ENCODE measurements at regions of chr5 and their contacts with region 1.

Region 1: DNA sequence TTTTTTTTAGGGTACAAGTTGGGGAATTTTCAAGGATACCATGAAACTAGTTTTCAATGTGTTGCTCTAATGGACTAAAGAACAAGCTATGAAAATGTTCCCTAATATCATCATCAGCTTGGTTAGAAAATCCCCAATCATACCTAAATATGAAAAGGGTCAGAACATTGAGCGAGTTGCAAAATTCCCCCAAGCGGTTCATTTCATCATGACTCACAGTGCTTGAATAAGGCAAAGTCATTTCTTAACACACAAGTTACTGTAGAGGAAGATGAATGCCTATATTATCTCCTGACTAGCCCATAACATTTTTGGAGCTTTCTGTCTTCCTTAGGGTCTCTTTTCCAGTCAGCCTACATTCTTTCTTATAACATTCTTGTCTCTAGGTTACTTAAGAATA is 62.7 kb downstream of the ST8SIA4 start:
- DNase-seq: peak; percentile 82
- H3K4me3 Mint-ChIP-seq: no peak overlapping the region
- H3K27ac Mint-ChIP-seq: peak overlapping the region; percentile 23
- H3K4me1 Mint-ChIP-seq: peaks cover 29% of the 10 kb centered on the region
- H3K27me3 Mint-ChIP-seq: no peaks in the 10 kb centered on the region
- CTCF ChIP-seq: no peak

Region 2: DNA sequence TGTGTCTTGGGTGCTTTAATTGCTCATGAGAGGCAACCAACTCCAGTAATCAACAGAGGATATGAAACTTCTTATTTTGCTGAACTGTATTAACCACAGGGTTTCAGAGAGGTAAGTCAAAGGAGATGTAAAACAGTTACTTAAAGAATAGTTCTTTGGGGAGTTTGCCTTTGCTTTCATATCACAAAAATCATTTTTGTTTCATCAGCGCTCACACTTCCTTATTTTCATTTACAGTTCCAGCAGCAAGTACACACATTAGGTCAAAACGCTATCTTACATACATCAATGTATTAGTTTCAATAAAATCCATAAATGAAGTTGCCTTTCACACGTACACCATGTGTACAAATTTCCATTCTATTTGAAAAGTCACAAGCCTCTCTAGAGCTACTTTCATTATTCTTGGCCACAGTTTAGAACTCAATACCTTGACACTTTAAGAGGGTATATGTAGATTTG is 12.6 kb after region 1 on chr5:
- CTCF ChIA-PET with region 1: no interaction called
- POLR2A ChIA-PET with region 1: interaction called, 10 read pairs
- intact Hi-C with region 1: no loop called
- DNase-seq: no peak
- H3K4me3 Mint-ChIP-seq: no peak overlapping the region
- H3K27ac Mint-ChIP-seq: no peak overlapping the region
- H3K4me1 Mint-ChIP-seq: no peaks in the 10 kb centered on the region
- H3K27me3 Mint-ChIP-seq: no peaks in the 10 kb centered on the region
- CTCF ChIP-seq: no peak

Region 3: DNA sequence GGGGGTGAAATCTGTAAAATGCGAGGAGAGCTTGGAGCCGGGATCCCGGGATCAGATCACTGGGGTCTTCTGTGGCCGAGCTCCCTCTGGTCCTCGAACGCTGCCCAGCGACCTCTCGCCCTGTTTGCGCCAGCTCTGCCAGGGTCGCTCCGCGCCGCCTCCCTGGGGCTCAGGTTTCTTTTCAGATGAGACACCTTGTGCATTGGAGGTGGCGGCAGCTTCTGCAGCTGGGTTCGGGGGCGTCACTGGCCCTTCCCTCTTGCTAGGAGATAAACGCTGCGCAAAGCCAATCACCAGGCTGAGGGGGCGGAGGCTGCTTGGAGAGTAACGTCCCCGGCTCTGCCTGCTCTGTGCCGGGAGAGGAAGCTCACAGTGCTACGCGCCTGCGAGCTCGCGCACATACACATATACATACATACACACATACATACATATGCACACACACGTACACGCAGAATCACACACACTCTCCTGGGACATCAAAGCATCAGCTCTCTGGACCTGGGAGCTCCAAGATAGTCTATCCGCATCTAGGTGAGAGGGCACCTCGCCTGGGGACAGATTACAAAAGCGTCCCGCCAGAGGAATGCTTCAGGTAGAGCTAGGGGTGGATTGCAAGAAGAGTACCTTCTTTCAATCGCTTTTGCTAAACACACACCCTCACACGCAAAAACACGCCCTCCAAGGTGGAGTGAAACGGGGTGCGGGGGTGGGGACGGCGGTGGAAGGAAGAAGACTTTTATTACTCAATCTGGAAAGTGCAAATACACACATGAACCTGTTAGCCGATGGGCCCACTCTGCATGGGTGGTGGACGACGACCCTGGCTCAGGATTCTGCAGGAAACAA is 62.9 kb after region 1 on chr5 and contains the start of gene ST8SIA4:
- CTCF ChIA-PET with region 1: interaction called, 3 read pairs
- POLR2A ChIA-PET with region 1: interaction called, 5 read pairs
- intact Hi-C with region 1: loop called (anchors 5 kb)
- DNase-seq: peak; percentile 79
- H3K4me3 Mint-ChIP-seq: peak within 1 kb of the TSS; percentile 61
- H3K27ac Mint-ChIP-seq: no peak within 1 kb of the TSS
- H3K4me1 Mint-ChIP-seq: peaks cover 16% of the 10 kb centered on the region
- H3K27me3 Mint-ChIP-seq: no peaks in the 10 kb centered on the region
- CTCF ChIP-seq: no peak
- total RNA-seq, gene ST8SIA4: 0.26 and 0.54 TPM in 2 replicates